CD8-positive, alpha-beta T cell (primary cell): ENCODE measurements at regions of chr1 and their contacts with region 1.

Region 1: GRCh38 chr1:37486680-37487618 is 12.6 kb downstream of the ZC3H12A start:
- DNase-seq: peak; percentile 54 to 88 (median 82)
- ATAC-seq: peak; percentile 74
- H3K4me3 ChIP-seq: no peak overlapping the region
- H3K4me3 Mint-ChIP-seq: no peak overlapping the region
- H3K27ac ChIP-seq: peak overlapping the region in 1 of 2 experiments; percentile 17
- H3K27ac Mint-ChIP-seq: peak overlapping the region; percentile 71
- H3K4me1 ChIP-seq: peaks cover 11% of the 10 kb centered on the region
- H3K4me1 Mint-ChIP-seq: peaks cover 20% of the 10 kb centered on the region
- H3K27me3 ChIP-seq: no peaks in the 10 kb centered on the region
- H3K27me3 Mint-ChIP-seq: no peaks in the 10 kb centered on the region
- CTCF ChIP-seq: peak; percentile 94

Region 2: GRCh38 chr1:36576118-36576517 is 910.8 kb before region 1 on chr1:
- CTCF ChIA-PET with region 1: no interaction called
- POLR2A ChIA-PET with region 1: no interaction called
- intact Hi-C with region 1: loop called in 1 of 2 experiments (anchors 5 kb)
- DNase-seq: peak; percentile 9 to 64 (median 42)
- ATAC-seq: no peak
- H3K4me3 ChIP-seq: no peak overlapping the region
- H3K4me3 Mint-ChIP-seq: no peak overlapping the region
- H3K27ac ChIP-seq: no peak overlapping the region
- H3K27ac Mint-ChIP-seq: no peak overlapping the region
- H3K4me1 ChIP-seq: no peaks in the 10 kb centered on the region
- H3K4me1 Mint-ChIP-seq: no peaks in the 10 kb centered on the region
- H3K27me3 ChIP-seq: peaks cover 0 to 2% of the 10 kb centered on the region in 2 experiments
- H3K27me3 Mint-ChIP-seq: peaks cover 37% of the 10 kb centered on the region
- CTCF ChIP-seq: peak; percentile 70

Region 3: GRCh38 chr1:37354876-37355650 is 131.9 kb before region 1 on chr1:
- CTCF ChIA-PET with region 1: no interaction called
- POLR2A ChIA-PET with region 1: no interaction called
- intact Hi-C with region 1: no loop called
- DNase-seq: no peak
- ATAC-seq: no peak
- H3K4me3 ChIP-seq: no peak overlapping the region
- H3K4me3 Mint-ChIP-seq: no peak overlapping the region
- H3K27ac ChIP-seq: no peak overlapping the region
- H3K27ac Mint-ChIP-seq: no peak overlapping the region
- H3K4me1 ChIP-seq: no peaks in the 10 kb centered on the region
- H3K4me1 Mint-ChIP-seq: no peaks in the 10 kb centered on the region
- H3K27me3 ChIP-seq: no peaks in the 10 kb centered on the region
- H3K27me3 Mint-ChIP-seq: peaks cover 29% of the 10 kb centered on the region
- CTCF ChIP-seq: no peak

Region 4: GRCh38 chr1:37434292-37434907 is 52.5 kb before region 1 on chr1:
- CTCF ChIA-PET with region 1: interaction called, 24 read pairs
- POLR2A ChIA-PET with region 1: no interaction called
- intact Hi-C with region 1: no loop called
- DNase-seq: peak; percentile 47 to 76 (median 67)
- ATAC-seq: peak; percentile 85
- H3K4me3 ChIP-seq: no peak overlapping the region
- H3K4me3 Mint-ChIP-seq: no peak overlapping the region
- H3K27ac ChIP-seq: no peak overlapping the region
- H3K27ac Mint-ChIP-seq: no peak overlapping the region
- H3K4me1 ChIP-seq: no peaks in the 10 kb centered on the region
- H3K4me1 Mint-ChIP-seq: no peaks in the 10 kb centered on the region
- H3K27me3 ChIP-seq: no peaks in the 10 kb centered on the region
- H3K27me3 Mint-ChIP-seq: peaks cover 35% of the 10 kb centered on the region
- CTCF ChIP-seq: peak; percentile 65

Region 5: DNA sequence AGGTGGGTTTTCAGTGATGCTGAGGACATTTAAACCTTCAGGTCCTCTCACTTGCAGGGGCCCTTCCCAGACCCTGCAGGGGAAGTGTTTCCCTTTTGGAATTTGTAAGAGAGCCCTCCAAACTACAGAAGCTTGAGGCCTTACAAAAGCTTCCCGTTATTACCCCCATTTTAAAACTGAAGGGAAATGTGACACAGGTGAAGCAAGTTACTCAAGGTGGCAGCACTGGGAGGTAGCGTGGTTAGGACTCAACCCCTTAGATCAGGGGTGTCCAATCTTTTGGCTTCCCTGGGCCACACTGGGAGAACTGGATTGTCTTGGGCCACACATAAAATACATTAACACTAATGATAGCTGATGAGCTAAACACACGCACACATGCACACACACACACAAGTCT is 28.4 kb before region 1 on chr1:
- CTCF ChIA-PET with region 1: interaction called, 559 read pairs
- POLR2A ChIA-PET with region 1: interaction called, 21 read pairs
- intact Hi-C with region 1: loop called (anchors 1 kb)
- DNase-seq: peak in 2 of 9 experiments; percentile 31 to 45
- ATAC-seq: no peak
- H3K4me3 ChIP-seq: no peak overlapping the region
- H3K4me3 Mint-ChIP-seq: no peak overlapping the region
- H3K27ac ChIP-seq: no peak overlapping the region
- H3K27ac Mint-ChIP-seq: no peak overlapping the region
- H3K4me1 ChIP-seq: no peaks in the 10 kb centered on the region
- H3K4me1 Mint-ChIP-seq: peaks cover 9% of the 10 kb centered on the region
- H3K27me3 ChIP-seq: no peaks in the 10 kb centered on the region
- H3K27me3 Mint-ChIP-seq: no peaks in the 10 kb centered on the region
- CTCF ChIP-seq: no peak

Region 6: DNA sequence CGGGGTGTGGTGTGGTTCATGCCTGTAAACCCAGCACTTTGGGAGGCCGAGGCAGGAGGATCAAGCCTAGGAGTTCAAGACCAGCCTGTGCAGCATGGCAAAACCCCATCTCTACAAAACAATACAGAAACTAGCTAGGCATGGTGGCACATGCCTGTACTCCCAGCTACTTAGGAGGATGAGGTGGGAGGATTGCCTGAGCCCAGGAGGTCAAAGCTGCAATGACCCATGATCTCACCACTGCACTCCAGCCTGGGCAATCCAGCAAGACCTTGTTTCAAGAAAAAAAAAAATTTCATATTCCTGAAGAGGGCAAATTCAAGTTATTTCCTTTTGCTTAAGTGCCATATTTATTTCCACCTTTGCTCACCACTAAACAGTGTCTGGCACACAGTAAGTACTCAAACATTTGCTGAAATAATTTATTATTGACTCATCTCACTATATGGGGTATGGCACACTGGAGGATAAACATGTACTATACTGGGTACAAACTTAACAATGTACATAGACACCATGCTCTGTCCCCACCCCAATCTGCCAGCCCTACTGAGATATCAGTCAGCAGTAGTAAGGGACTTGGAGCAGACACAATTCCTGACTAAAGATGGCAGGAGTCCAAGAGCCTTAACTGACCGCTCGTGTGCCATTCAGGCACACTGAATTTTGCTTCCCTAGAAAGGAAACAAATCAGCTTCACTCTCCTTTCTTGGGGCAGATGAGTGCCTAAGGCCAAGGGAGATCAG is 12.1 kb after region 1 on chr1:
- CTCF ChIA-PET with region 1: interaction called, 87 read pairs
- POLR2A ChIA-PET with region 1: interaction called, 4 read pairs
- intact Hi-C with region 1: no loop called
- DNase-seq: no peak
- ATAC-seq: no peak
- H3K4me3 ChIP-seq: no peak overlapping the region
- H3K4me3 Mint-ChIP-seq: no peak overlapping the region
- H3K27ac ChIP-seq: no peak overlapping the region
- H3K27ac Mint-ChIP-seq: no peak overlapping the region
- H3K4me1 ChIP-seq: no peaks in the 10 kb centered on the region
- H3K4me1 Mint-ChIP-seq: peaks cover 13% of the 10 kb centered on the region
- H3K27me3 ChIP-seq: no peaks in the 10 kb centered on the region
- H3K27me3 Mint-ChIP-seq: no peaks in the 10 kb centered on the region
- CTCF ChIP-seq: no peak

Region 7: GRCh38 chr1:37509181-37509580 is 22.2 kb after region 1 on chr1:
- CTCF ChIA-PET with region 1: interaction called, 28 read pairs
- POLR2A ChIA-PET with region 1: interaction called, 11 read pairs
- intact Hi-C with region 1: no loop called
- DNase-seq: no peak
- ATAC-seq: no peak
- H3K4me3 ChIP-seq: no peak overlapping the region
- H3K4me3 Mint-ChIP-seq: no peak overlapping the region
- H3K27ac ChIP-seq: no peak overlapping the region
- H3K27ac Mint-ChIP-seq: peak overlapping the region; percentile 41
- H3K4me1 ChIP-seq: peaks cover 21% of the 10 kb centered on the region
- H3K4me1 Mint-ChIP-seq: peaks cover 44% of the 10 kb centered on the region
- H3K27me3 ChIP-seq: no peaks in the 10 kb centered on the region
- H3K27me3 Mint-ChIP-seq: no peaks in the 10 kb centered on the region
- CTCF ChIP-seq: no peak

Region 8: GRCh38 chr1:37514350-37515184 is 27.6 kb after region 1 on chr1 and contains the start of gene MEAF6:
- CTCF ChIA-PET with region 1: interaction called, 28 read pairs
- POLR2A ChIA-PET with region 1: interaction called, 11 read pairs
- intact Hi-C with region 1: no loop called
- DNase-seq: peak; percentile 68 to 92 (median 83)
- ATAC-seq: peak; percentile 94
- H3K4me3 ChIP-seq: peak within 1 kb of the TSS; percentile 59 to 67
- H3K4me3 Mint-ChIP-seq: peak within 1 kb of the TSS; percentile 97
- H3K27ac ChIP-seq: peak within 1 kb of the TSS; percentile 78 to 79
- H3K27ac Mint-ChIP-seq: peak within 1 kb of the TSS; percentile 97
- H3K4me1 ChIP-seq: peaks cover 30% of the 10 kb centered on the region
- H3K4me1 Mint-ChIP-seq: peaks cover 44% of the 10 kb centered on the region
- H3K27me3 ChIP-seq: no peaks in the 10 kb centered on the region
- H3K27me3 Mint-ChIP-seq: no peaks in the 10 kb centered on the region
- CTCF ChIP-seq: peak; percentile 72
- total RNA-seq, gene MEAF6: 43.4 to 46.0 TPM

Region 9: GRCh38 chr1:37634244-37634991 is 147.5 kb after region 1 on chr1 and contains the start of gene RSPO1:
- CTCF ChIA-PET with region 1: no interaction called
- POLR2A ChIA-PET with region 1: no interaction called
- intact Hi-C with region 1: no loop called
- DNase-seq: no peak
- ATAC-seq: no peak
- H3K4me3 ChIP-seq: no peak within 1 kb of the TSS
- H3K4me3 Mint-ChIP-seq: peak within 1 kb of the TSS; percentile 45
- H3K27ac ChIP-seq: no peak within 1 kb of the TSS
- H3K27ac Mint-ChIP-seq: no peak within 1 kb of the TSS
- H3K4me1 ChIP-seq: no peaks in the 10 kb centered on the region
- H3K4me1 Mint-ChIP-seq: peaks cover 10% of the 10 kb centered on the region
- H3K27me3 ChIP-seq: peaks cover 13 to 22% of the 10 kb centered on the region in 2 experiments
- H3K27me3 Mint-ChIP-seq: peaks cover 65% of the 10 kb centered on the region
- CTCF ChIP-seq: no peak
- total RNA-seq, gene RSPO1: not detected